Head of caudate nucleus (tissue), 42 donors: ENCODE measurements at regions of chr20 and their contacts with region 1.

Region 1: DNA sequence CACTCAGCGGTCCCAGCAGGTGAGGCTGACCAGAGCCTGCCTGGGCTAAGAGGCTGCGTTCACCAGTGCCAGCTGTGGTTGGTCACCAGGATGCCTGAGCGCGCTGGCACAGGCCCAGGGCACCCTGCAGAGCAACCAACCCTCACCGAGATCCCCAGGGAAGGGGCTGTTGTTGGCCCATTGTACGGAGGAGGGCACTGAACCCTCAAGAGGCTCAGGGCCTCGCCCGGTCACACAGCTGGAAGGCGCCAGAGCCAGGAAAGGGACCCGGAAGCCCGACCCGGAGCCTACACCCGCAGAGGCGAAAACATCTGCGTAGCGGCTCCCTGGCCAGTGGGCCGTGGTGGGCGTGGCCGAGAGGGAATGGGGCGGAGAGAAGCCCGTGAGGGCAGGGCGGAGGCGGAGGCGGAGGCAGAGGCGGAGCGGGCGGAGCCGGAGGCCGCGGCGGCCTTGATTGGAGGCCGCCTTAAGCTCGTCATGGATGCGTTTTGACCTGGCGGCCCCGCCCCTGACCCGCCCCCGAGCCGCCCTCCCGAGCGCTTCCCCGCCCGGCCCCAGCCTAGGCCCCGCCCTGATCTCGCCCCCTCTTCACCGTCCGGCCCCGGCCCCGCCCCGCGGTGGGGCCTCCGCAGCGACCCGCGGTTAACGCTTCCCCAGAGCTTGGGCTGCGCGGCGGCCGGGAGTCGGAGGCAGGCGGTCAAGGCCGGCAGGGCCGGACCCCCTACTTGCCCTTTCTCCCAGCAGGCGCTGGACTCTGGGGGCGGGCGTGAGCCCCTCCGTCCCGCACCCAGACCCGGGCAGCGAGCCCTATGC is 2.2 kb upstream of the MRGBP start:
- DNase-seq: peak; percentile 89 to 99 (median 97)

Region 2: DNA sequence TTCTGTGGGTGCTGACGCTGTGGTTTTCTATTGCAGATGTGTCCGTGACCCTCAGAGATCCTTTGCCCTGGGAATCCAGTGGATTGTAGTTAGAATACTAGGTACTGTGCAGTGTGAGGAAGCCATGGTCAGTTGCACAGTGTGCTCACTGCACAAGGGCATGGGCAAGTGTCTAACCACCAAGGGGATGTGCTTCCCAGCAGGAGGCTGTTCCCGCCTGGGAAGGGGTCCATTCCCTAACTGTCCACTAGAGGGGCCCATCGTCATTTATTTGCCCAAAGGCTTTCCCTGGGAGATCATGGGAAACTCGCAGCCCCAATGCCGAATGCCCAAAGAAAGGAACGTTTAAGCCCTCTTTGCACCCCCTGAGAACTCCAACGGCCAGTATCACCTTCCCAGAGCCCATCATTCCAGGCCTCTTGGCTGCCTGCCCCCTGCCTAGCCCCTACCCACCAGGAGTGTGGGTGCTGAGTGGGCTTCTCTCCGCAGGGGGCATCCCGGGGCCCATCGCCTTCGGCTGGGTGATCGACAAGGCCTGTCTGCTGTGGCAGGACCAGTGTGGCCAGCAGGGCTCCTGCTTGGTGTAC is 125.6 kb before region 1 on chr20:
- intact Hi-C with region 1: loop called (anchors 5 kb)
- DNase-seq: peak; percentile 59 to 94 (median 84)